OCI-LY7 (cell line): ENCODE measurements at regions of chr2 and their contacts with region 1.

Region 1: GRCh38 chr2:155145758-155146229 is 447.3 kb downstream of the KCNJ3 start:
- DNase-seq: peak; percentile 95
- H3K4me3 ChIP-seq: peak overlapping the region; percentile 64
- H3K27ac ChIP-seq: peak overlapping the region; percentile 100
- H3K4me1 ChIP-seq: peaks cover 72% of the 10 kb centered on the region
- CTCF ChIP-seq: 0 out of 2 replicates have a peak, but pooled peaks have one; percentile 23

Region 2: GRCh38 chr2:154978710-154979109 is 167.1 kb before region 1 on chr2:
- CTCF ChIA-PET with region 1: no interaction called
- POLR2A ChIA-PET with region 1: interaction called, 5 read pairs
- intact Hi-C with region 1: loop called (anchors 2 kb)
- DNase-seq: peak; percentile 31
- H3K4me3 ChIP-seq: no peak overlapping the region
- H3K27ac ChIP-seq: peak overlapping the region; percentile 32
- H3K4me1 ChIP-seq: peaks cover 43% of the 10 kb centered on the region
- CTCF ChIP-seq: no peak

Region 3: GRCh38 chr2:154992826-154993225 is 153.0 kb before region 1 on chr2:
- CTCF ChIA-PET with region 1: no interaction called
- POLR2A ChIA-PET with region 1: no interaction called
- intact Hi-C with region 1: no loop called
- DNase-seq: no peak
- H3K4me3 ChIP-seq: no peak overlapping the region
- H3K27ac ChIP-seq: no peak overlapping the region
- H3K4me1 ChIP-seq: no peaks in the 10 kb centered on the region
- CTCF ChIP-seq: no peak

Region 4: DNA sequence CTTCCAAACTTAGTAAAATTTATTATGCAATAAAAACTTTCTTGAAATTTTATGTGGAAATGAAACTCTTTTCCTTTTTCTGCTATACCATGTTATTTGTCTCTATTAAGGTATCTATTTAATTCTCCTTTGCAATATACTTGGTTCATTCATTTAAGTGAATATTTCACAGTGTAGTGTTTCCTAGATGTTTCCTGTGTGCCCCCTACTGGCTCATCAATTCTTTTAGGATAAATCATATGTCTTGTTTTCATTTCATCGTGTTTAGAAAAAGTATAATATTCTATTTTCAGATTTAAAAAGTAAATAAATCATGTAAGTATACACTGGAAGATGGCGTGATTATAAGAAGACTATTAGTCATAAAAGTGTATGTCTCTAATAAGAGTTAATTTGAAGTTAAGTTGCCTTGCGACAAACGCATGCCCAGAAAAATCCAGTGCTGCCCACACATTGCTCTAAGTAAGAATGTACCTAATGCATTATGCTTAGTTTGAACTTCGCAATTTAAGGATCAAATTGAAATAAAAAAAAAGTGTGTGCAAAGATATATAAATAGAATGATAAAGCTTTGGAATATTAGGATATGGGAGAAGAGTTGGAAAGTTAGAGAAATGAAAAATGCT is 78.1 kb after region 1 on chr2:
- CTCF ChIA-PET with region 1: no interaction called
- POLR2A ChIA-PET with region 1: interaction called, 4 read pairs
- intact Hi-C with region 1: loop called (anchors 2 kb)
- DNase-seq: peak; percentile 50
- H3K4me3 ChIP-seq: no peak overlapping the region
- H3K27ac ChIP-seq: no peak overlapping the region
- H3K4me1 ChIP-seq: no peaks in the 10 kb centered on the region
- CTCF ChIP-seq: peak; percentile 91

Region 5: GRCh38 chr2:155298001-155298400 is 152.2 kb after region 1 on chr2:
- CTCF ChIA-PET with region 1: no interaction called
- POLR2A ChIA-PET with region 1: no interaction called
- intact Hi-C with region 1: loop called (anchors 5 kb)
- DNase-seq: peak; percentile 3
- H3K4me3 ChIP-seq: no peak overlapping the region
- H3K27ac ChIP-seq: no peak overlapping the region
- H3K4me1 ChIP-seq: peaks cover 7% of the 10 kb centered on the region
- CTCF ChIP-seq: no peak

Region 6: GRCh38 chr2:155755481-155755880 is 609.7 kb after region 1 on chr2:
- CTCF ChIA-PET with region 1: no interaction called
- POLR2A ChIA-PET with region 1: no interaction called
- intact Hi-C with region 1: no loop called
- DNase-seq: no peak
- H3K4me3 ChIP-seq: no peak overlapping the region
- H3K27ac ChIP-seq: no peak overlapping the region
- H3K4me1 ChIP-seq: no peaks in the 10 kb centered on the region
- CTCF ChIP-seq: no peak